ENCODE measurements at regions of chr16 and their contacts with region 1.

Region 1: DNA sequence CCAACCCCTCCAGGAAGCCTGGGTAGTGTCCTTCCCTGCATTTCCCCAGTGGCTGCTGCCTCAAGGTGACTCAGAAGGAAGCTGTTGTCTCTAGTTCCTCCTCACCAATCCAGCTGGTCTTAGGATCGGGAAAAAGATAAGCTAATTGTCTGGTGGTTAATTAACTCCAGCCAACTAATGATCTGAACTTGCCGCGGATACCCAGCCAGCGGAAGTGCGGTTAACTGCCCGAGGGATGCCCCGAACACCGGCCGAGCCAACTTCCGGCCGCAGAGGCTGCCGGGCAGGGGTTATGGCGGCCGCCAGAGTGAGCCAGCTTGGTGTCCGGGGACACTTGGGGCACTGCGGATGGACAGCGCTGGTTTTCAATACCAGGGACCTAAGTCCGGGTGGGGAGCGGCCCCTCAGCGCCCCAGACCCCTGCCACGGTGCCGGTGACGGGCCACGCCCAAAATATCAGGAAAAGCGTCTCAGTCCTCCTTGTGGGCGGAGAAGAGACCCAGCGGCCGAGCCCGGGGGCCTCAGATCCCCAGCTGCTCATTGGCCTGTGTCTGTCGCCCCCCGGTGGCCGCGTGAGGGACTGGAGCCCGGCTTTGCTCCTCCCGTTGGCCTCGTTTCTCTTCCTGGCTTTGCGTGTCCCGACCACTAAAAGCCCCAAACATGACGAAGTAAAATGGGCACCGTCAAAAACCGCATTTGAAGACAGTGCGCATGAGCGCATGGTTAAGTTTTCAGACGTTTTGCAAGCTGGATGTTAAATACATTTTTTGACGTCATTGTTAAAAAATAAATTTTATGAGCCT is 10.2 kb upstream of the PRSS22 start:
- DNase-seq: peak; percentile 98
- ATAC-seq: peak; percentile 96
- H3K4me3 Mint-ChIP-seq: peak overlapping the region; percentile 83
- H3K27ac Mint-ChIP-seq: peak overlapping the region; percentile 91
- H3K4me1 Mint-ChIP-seq: peaks cover 13% of the 10 kb centered on the region
- H3K27me3 Mint-ChIP-seq: peaks cover 3% of the 10 kb centered on the region

Region 2: GRCh38 chr16:2724816-2725348 is 143.3 kb before region 1 on chr16:
- CTCF ChIA-PET with region 1: no interaction called
- DNase-seq: no peak
- ATAC-seq: no peak
- H3K4me3 Mint-ChIP-seq: no peak overlapping the region
- H3K27ac Mint-ChIP-seq: no peak overlapping the region
- H3K4me1 Mint-ChIP-seq: peaks cover 4% of the 10 kb centered on the region
- H3K27me3 Mint-ChIP-seq: peaks cover 15% of the 10 kb centered on the region

Region 3: DNA sequence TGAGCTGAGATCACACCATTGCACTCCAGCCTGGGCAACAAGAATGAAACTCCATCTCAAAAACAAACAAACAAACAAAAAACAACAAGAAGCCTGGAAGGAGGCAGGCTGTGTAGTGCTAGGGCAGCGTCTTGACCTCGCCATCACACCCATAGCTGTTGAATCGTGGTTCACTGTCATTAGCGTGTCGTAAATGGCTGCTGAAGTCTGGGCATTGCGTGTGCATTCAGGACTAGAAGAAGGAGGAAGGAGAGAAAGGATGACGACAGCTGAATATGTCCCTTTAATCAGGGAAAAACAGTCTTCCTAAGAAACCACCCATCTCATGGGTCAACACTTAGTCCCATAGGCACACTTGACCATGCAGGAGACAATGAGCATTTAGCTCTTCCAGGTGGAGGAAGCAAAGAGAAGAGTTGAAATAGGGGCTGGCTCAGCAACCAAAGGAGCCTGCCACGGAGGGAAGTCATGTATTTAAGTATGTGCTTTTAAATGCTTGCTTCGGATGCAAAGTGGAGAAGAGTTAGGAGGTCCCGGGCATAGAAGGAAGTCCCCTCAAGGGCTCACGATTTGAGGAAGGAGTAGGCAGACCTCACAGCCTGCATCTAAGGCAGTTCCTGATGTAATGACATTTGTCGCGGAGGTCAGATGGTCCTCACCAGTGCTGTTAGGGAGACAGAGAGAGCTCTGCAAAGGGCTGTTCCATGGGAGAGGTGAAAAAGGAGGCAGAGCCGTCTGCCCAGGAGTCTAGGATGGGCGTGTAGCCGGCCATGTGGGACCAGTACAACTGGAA is 19.1 kb before region 1 on chr16:
- CTCF ChIA-PET with region 1: interaction called, 36 read pairs
- DNase-seq: no peak
- ATAC-seq: no peak
- H3K4me3 Mint-ChIP-seq: no peak overlapping the region
- H3K27ac Mint-ChIP-seq: no peak overlapping the region
- H3K4me1 Mint-ChIP-seq: peaks cover 21% of the 10 kb centered on the region
- H3K27me3 Mint-ChIP-seq: peaks cover 9% of the 10 kb centered on the region

Region 4: DNA sequence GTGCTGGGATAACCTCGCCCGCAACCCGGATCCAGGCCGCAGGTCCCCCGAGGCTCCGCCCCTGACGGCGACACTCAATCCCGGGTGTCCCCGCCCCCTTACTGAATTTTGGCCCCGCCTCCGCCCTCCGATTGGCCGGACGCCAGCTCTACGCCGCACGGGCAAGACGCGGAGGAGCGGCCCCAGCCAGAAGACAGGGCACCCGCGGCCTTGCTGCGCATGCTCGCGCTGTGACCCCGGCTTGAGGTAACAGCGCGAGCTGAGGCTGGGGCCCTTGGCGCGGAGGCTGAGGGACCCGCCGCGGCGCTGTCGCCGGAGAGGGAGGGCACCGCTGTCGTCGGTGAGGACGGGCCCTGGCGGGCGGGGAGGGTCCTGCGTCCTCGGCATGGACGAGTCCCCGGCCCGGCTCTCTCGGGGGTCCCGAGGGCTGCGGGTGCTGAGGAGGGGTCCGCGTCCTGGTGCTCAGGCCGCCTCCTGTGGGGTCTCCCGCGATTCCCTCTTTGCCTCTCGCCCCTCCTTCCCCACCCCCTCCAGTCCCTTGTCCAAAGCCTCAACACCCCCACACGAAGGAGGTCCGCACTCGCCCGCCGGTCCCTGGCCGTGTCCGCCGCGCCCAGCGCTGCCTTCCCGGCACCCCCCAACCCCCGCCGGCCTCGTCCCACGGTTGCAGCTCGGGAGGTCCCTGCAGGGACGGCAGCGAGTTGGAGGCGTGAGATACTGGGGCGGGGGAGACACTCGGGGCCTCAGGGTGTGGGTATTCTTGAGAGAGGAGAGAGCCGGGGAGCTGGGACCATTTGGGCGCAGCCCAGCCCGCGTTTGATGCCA is 15.1 kb after region 1 on chr16 and contains the start of gene FLYWCH2:
- CTCF ChIA-PET with region 1: interaction called, 31 read pairs
- DNase-seq: peak; percentile 99
- ATAC-seq: peak; percentile 84
- H3K4me3 Mint-ChIP-seq: peak within 1 kb of the TSS; percentile 87
- H3K27ac Mint-ChIP-seq: peak within 1 kb of the TSS; percentile 94
- H3K4me1 Mint-ChIP-seq: peaks cover 17% of the 10 kb centered on the region
- H3K27me3 Mint-ChIP-seq: no peaks in the 10 kb centered on the region
- total RNA-seq, gene FLYWCH2: 19.6 to 19.7 TPM

Region 5: DNA sequence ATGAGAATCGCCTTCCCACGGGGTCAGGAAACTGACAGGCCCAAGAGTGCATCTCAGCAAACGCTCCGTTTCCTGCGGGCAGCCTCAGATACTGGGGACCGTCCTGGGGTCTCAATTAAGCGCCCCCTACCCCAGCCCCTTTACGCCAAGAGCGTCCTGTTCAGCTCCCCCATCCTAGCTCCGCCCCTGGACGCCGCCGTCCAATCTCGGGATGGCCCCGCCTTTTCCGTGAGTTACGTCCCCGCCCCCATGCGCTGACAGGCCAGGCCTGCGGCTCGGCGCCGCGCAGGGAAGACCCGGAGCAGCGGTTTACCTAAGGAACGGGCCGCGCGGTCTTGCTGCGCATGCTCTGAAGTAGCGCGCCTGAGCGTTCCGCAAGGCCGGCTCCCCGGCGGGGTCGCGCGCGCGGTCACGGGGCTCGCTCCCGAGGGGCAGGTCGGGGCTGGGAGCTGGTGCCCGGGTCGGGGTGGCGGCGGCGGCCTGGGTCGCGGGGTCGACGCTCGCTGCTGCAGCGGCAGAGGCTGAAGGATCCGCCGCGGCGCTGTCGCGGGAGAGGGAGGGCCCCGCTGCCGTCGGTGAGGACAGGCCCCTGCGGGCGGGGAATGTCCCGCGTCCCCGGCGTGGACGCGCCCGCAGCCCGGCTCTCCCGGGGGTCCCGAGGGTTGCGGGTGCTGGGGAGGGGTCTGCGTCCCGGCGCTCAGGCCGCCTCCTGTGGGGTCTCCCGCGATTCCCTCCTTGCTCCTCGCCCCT is 43.6 kb after region 1 on chr16 and contains the start of gene FLYWCH1:
- CTCF ChIA-PET with region 1: interaction called, 20 read pairs
- DNase-seq: peak; percentile 99
- ATAC-seq: peak; percentile 95
- H3K4me3 Mint-ChIP-seq: peak within 1 kb of the TSS; percentile 87
- H3K27ac Mint-ChIP-seq: peak within 1 kb of the TSS; percentile 74
- H3K4me1 Mint-ChIP-seq: peaks cover 33% of the 10 kb centered on the region
- H3K27me3 Mint-ChIP-seq: peaks cover 9% of the 10 kb centered on the region
- total RNA-seq, gene FLYWCH1: 52.7 to 58.1 TPM

Measured in activated CD8-positive, alpha-beta memory T cell treated with anti-CD3 and anti-CD28 coated beads, Interleukin-2, amount 10 ng/mL, durations not matched to agents 7 days and 5 days (primary cell).